Panc1 (cell line): ENCODE measurements at regions of chr15 and their contacts with region 1.

Region 1: DNA sequence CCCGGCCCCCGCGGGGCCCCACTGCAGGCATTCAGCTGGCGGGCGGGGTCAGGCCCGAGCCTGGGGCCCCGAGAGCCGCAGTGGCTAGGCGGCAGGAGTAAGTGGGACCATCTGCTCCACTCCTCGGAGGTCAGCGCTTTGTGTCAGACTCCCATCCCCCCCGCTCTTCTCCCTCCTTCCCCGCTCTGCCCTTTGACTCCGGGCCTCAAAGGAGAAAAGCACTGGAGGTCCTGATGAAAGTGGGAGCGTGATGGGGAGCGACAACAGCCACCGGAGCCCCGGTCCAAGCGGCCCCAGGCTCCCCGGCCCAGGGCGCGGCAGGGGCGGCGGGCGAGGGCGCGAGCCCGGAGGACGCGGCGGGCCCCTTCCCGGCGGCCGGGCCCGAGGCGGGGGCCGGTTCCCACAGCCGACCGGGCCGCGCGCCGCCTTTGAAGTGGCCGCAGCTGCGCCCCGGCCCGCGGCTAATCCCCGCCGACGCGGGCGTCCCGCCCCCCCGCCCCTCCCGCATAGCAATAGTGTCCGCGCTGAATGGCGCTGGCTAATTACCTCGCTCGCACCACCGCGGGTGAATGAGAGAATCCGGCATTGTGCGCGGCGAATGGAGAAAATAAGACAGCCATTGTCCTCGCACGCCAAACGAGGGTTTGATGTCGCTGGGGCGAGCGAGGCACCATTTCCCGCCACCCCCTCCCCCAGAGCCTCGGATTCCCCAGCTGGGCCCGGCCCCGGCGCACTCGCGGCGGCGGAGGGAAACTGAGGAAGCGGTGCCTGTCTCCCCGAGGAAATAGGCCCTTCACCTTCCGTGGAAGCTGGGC is 22.4 kb downstream of the IGDCC3 start:
- DNase-seq: no peak
- ATAC-seq: peak; percentile 70
- H3K4me3 ChIP-seq: peak overlapping the region; percentile 30 to 45
- H3K27ac ChIP-seq: no peak overlapping the region
- H3K4me1 ChIP-seq: peaks cover 3% of the 10 kb centered on the region; the same call in 1 of the 2 replicates
- H3K27me3 ChIP-seq: peaks cover 16% of the 10 kb centered on the region
- CTCF ChIP-seq: no peak

Region 2: GRCh38 chr15:65264863-65265430 is 90.4 kb before region 1 on chr15:
- CTCF ChIA-PET with region 1: no interaction called
- POLR2A ChIA-PET with region 1: interaction called, 12 read pairs
- in situ Hi-C with region 1: no loop called
- intact Hi-C with region 1: no loop called
- DNase-seq: no peak
- ATAC-seq: no peak
- H3K4me3 ChIP-seq: no peak overlapping the region
- H3K27ac ChIP-seq: no peak overlapping the region
- H3K4me1 ChIP-seq: no peaks in the 10 kb centered on the region
- H3K27me3 ChIP-seq: no peaks in the 10 kb centered on the region
- CTCF ChIP-seq: no peak

Region 3: GRCh38 chr15:65318870-65319356 is 36.5 kb before region 1 on chr15:
- CTCF ChIA-PET with region 1: no interaction called
- POLR2A ChIA-PET with region 1: no interaction called
- in situ Hi-C with region 1: no loop called
- intact Hi-C with region 1: no loop called
- DNase-seq: no peak
- ATAC-seq: peak; percentile 99
- H3K4me3 ChIP-seq: no peak overlapping the region
- H3K27ac ChIP-seq: no peak overlapping the region
- H3K4me1 ChIP-seq: no peaks in the 10 kb centered on the region
- H3K27me3 ChIP-seq: no peaks in the 10 kb centered on the region
- CTCF ChIP-seq: peak; percentile 92